ENCODE measurements at regions of chr6 and their contacts with region 1.

Region 1: GRCh38 chr6:37791156-37791919 is 28.2 kb upstream of the ZFAND3 start:
- DNase-seq: peak; percentile 88 to 95
- H3K4me3 ChIP-seq: no peak overlapping the region
- H3K4me1 ChIP-seq: peaks cover 3% of the 10 kb centered on the region; the same call in 1 of the 2 replicates
- H3K27me3 ChIP-seq: no peaks in the 10 kb centered on the region

Region 2: GRCh38 chr6:38012573-38012972 is 221.2 kb after region 1 on chr6:
- in situ Hi-C with region 1: loop called (anchors 10 kb)
- DNase-seq: peak; percentile 61 to 63
- H3K4me3 ChIP-seq: no peak overlapping the region
- H3K4me1 ChIP-seq: no peaks in the 10 kb centered on the region
- H3K27me3 ChIP-seq: no peaks in the 10 kb centered on the region

Region 3: GRCh38 chr6:38100380-38100779 is 309.0 kb after region 1 on chr6:
- in situ Hi-C with region 1: no loop called
- DNase-seq: no peak
- H3K4me3 ChIP-seq: no peak overlapping the region
- H3K4me1 ChIP-seq: no peaks in the 10 kb centered on the region
- H3K27me3 ChIP-seq: no peaks in the 10 kb centered on the region

Region 4: GRCh38 chr6:38179300-38179699 is 388.0 kb after region 1 on chr6:
- in situ Hi-C with region 1: no loop called
- DNase-seq: peak in 1 of 2 experiments; percentile 6
- H3K4me3 ChIP-seq: no peak overlapping the region
- H3K4me1 ChIP-seq: peaks cover 13% of the 10 kb centered on the region
- H3K27me3 ChIP-seq: no peaks in the 10 kb centered on the region

Region 5: DNA sequence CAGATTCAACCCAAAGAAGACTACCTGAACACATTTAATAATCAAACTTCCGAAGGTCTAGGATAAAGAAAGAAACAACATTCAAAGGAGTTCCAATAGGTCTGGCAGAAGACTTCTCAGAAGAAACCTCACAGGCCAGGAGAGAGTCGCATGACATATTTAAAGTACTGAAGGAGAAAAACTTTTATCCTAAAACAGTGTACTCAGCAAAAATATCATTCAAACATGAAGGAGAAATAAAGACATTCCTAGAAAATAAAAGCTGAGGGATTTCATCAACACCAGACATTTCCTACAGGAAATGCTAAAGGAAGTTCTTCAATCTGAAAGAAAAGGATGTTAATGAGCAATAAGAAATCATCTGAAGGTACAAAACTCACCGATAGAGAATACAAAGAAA is 739.8 kb after region 1 on chr6:
- in situ Hi-C with region 1: no loop called
- DNase-seq: no peak
- H3K4me3 ChIP-seq: no peak overlapping the region
- H3K4me1 ChIP-seq: peaks cover under 1% of the 10 kb centered on the region; the same call in 1 of the 2 replicates
- H3K27me3 ChIP-seq: no peaks in the 10 kb centered on the region

Measured in HAP-1 (cell line).